Dendritic cell treated with granulocyte-macrophage colony-stimulating factor and Interleukin-4, amounts not matched to agents 40 ng/mL and 50 ng/mL, for 4 days (primary cell): ENCODE measurements at regions of chr1 and their contacts with region 1.

Region 1: GRCh38 chr1:108897865-108898720 is 21.3 kb downstream of the GPSM2 start:
- H3K4me3 Mint-ChIP-seq: no peak overlapping the region
- H3K27ac Mint-ChIP-seq: no peak overlapping the region
- H3K4me1 Mint-ChIP-seq: peaks cover 6% of the 10 kb centered on the region
- H3K27me3 Mint-ChIP-seq: no peaks in the 10 kb centered on the region

Region 2: GRCh38 chr1:108777839-108778238 is 120.3 kb before region 1 on chr1:
- intact Hi-C with region 1: no loop called
- H3K4me3 Mint-ChIP-seq: no peak overlapping the region
- H3K27ac Mint-ChIP-seq: no peak overlapping the region
- H3K4me1 Mint-ChIP-seq: no peaks in the 10 kb centered on the region
- H3K27me3 Mint-ChIP-seq: no peaks in the 10 kb centered on the region

Region 3: DNA sequence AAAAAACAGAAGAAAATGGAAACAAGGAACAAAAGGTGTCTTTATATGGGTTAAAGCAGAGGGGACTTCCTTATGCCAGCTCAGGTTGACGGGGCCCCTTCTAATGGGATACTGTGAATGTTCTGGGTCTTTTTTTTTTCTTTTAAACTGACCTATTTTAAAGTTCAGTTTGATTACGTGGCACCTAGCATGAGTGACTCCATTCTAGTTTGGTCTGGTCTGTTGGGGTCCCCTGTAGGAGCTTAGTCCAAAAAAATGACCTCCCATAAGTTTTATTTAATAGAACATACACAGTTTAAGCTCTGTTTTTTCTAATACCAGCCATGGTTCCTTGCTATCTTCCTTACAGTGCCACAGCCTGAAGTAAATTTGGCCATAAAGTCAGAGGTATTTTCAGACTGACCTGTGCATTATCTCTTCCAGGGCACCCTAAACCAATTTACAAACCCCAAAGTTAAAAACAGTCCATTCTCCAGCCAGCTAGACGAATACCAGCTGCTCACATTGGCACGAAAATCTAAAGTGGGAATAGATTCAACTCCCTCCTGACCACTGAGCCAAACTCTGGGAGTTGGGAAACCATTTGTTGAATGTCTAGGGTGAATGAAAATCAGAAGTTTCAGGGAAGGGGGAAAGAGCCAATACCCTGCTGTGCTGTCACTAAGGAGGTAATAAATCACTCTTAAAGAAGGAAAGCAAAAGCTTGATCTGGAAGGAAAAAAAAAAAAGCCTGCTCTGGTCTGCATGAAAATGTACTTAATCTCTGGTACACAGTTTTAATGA is 83.6 kb before region 1 on chr1:
- intact Hi-C with region 1: no loop called
- H3K4me3 Mint-ChIP-seq: no peak overlapping the region
- H3K27ac Mint-ChIP-seq: no peak overlapping the region
- H3K4me1 Mint-ChIP-seq: no peaks in the 10 kb centered on the region
- H3K27me3 Mint-ChIP-seq: no peaks in the 10 kb centered on the region

Region 4: GRCh38 chr1:108828022-108828961 is 69.8 kb before region 1 on chr1:
- intact Hi-C with region 1: loop called (anchors 1 kb)
- H3K4me3 Mint-ChIP-seq: no peak overlapping the region
- H3K27ac Mint-ChIP-seq: no peak overlapping the region
- H3K4me1 Mint-ChIP-seq: peaks cover 14% of the 10 kb centered on the region
- H3K27me3 Mint-ChIP-seq: no peaks in the 10 kb centered on the region

Region 5: DNA sequence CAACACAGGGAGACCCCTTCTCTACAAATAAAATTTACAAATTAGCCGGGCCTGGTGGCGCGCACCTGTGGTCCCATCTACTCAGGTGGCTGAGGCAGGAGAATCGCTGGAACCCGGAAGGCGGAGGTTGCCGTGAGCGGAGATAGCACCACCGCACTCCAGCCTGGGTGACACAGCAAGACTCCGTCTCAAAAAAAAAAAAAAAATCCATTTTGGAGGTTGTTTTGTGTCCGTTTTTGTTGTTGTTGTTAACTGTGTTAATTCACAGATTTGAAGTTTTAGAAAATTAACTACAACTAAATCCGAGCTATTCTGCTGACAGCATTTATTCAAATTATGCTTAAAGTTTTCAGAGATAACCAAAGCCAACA is 64.6 kb after region 1 on chr1:
- intact Hi-C with region 1: no loop called
- H3K4me3 Mint-ChIP-seq: peak overlapping the region; percentile 94
- H3K27ac Mint-ChIP-seq: peak overlapping the region; percentile 97
- H3K4me1 Mint-ChIP-seq: peaks cover 33% of the 10 kb centered on the region
- H3K27me3 Mint-ChIP-seq: no peaks in the 10 kb centered on the region

Region 6: DNA sequence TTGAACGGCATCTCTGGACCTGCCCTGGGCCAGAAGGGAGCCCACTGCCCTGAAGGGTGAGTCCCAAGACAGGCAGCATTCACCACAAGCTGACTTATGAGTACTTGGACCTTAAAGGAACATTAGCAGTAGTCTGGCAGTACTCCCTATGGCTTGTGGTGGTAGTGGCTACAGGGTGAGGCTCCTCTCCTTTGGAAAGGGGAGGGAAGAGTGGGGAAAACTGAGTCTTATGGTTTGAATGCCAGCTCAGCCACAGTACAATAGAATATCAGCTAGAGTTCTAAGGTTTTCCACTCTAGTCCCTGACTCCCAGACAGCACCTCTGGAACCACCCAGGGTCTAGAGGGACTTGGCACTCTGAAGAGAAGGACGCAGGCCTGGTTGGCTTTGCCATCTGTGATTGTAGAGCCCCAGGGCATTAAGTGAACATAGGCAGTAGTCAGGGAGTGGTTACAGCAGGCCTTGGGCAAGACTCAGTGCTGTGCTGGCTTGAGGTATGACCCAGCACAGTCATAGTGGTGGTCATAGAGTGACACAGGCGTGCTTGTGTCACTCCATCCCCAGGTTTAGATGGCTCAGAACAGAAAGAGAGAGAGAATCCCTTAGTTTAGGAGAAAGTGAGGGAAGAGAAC is 2005.9 kb after region 1 on chr1:
- intact Hi-C with region 1: no loop called
- H3K4me3 Mint-ChIP-seq: no peak overlapping the region
- H3K27ac Mint-ChIP-seq: no peak overlapping the region
- H3K4me1 Mint-ChIP-seq: no peaks in the 10 kb centered on the region
- H3K27me3 Mint-ChIP-seq: no peaks in the 10 kb centered on the region